Activated CD4-positive, alpha-beta memory T cell treated with anti-CD3 and anti-CD28 coated beads for 36 hours (primary cell): ENCODE measurements at regions of chr15 and their contacts with region 1.

Region 1: GRCh38 chr15:101501703-101502373 is 12.3 kb upstream of the PCSK6 start:
- DNase-seq: peak; percentile 70
- H3K4me3 Mint-ChIP-seq: no peak overlapping the region
- H3K27ac Mint-ChIP-seq: no peak overlapping the region
- H3K4me1 Mint-ChIP-seq: peaks cover 6% of the 10 kb centered on the region
- H3K27me3 Mint-ChIP-seq: peaks cover 15% of the 10 kb centered on the region

Region 2: GRCh38 chr15:100842756-100843725 is 658.8 kb before region 1 on chr15:
- CTCF ChIA-PET with region 1: no interaction called
- POLR2A ChIA-PET with region 1: no interaction called
- intact Hi-C with region 1: no loop called
- DNase-seq: no peak
- H3K4me3 Mint-ChIP-seq: no peak overlapping the region
- H3K27ac Mint-ChIP-seq: no peak overlapping the region
- H3K4me1 Mint-ChIP-seq: no peaks in the 10 kb centered on the region
- H3K27me3 Mint-ChIP-seq: peaks cover 5% of the 10 kb centered on the region

Region 3: DNA sequence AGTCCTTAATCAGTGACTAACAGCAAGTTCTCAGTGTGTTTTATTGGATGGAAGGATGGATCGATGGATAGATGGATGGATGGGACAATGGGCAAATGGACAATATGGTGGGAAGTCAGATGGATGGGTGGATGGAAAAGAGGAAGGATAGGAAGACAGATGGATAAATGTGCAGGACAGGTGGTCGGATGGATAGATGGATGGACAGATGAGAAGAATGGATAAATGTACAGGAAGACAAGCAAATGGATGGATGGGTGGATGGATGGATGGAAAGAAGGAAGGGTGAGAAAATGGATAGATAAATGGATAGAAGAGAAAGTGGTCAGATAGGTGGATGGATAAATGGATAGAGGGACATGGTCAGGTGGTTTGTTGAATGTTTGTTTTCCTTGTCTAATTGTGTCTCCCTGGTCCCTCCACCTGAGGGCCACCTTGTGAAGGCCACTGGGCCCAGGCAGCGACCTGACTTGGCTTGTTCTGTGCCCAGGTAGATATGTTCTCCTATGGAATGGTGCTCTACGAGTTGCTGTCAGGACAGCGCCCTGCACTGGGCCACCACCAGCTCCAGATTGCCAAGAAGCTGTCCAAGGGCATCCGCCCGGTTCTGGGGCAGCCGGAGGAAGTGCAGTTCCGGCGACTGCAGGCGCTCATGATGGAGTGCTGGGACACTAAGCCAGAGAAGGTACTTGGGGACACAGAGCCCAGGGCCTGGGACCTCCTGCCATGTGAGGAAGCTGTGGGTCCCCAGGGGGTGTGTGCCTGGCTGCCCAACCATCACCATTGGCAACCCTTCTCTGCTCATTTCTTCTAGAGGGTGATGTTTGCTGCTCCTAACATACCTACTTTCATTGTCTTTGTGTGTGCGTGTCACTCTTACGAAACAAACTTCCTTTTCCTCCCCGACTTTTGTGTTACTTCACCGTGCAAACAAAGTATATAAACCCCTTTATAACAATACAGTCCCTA is 445.2 kb before region 1 on chr15:
- CTCF ChIA-PET with region 1: no interaction called
- POLR2A ChIA-PET with region 1: no interaction called
- intact Hi-C with region 1: no loop called
- DNase-seq: no peak
- H3K4me3 Mint-ChIP-seq: no peak overlapping the region
- H3K27ac Mint-ChIP-seq: no peak overlapping the region
- H3K4me1 Mint-ChIP-seq: no peaks in the 10 kb centered on the region
- H3K27me3 Mint-ChIP-seq: peaks cover 2% of the 10 kb centered on the region

Region 4: GRCh38 chr15:101305820-101306255 is 196.0 kb before region 1 on chr15:
- CTCF ChIA-PET with region 1: interaction called, 9 read pairs
- POLR2A ChIA-PET with region 1: no interaction called
- intact Hi-C with region 1: loop called (anchors 2 kb)
- DNase-seq: no peak
- H3K4me3 Mint-ChIP-seq: no peak overlapping the region
- H3K27ac Mint-ChIP-seq: no peak overlapping the region
- H3K4me1 Mint-ChIP-seq: no peaks in the 10 kb centered on the region
- H3K27me3 Mint-ChIP-seq: no peaks in the 10 kb centered on the region